ENCODE measurements at regions of chr7 and their contacts with region 1.

Region 1: GRCh38 chr7:87816389-87816788 is 59.8 kb downstream of the SLC25A40 start:
- DNase-seq: no peak
- H3K4me3 ChIP-seq: no peak overlapping the region
- CTCF ChIP-seq: no peak

Region 2: GRCh38 chr7:87784423-87784822 is 32.0 kb before region 1 on chr7:
- in situ Hi-C with region 1: loop called (anchors 5 kb)
- DNase-seq: no peak
- H3K4me3 ChIP-seq: no peak overlapping the region
- CTCF ChIP-seq: peak; percentile 11

Measured in astrocyte of the cerebellum (primary cell).